GM23248 (cell line): ENCODE measurements at regions of chr1 and their contacts with region 1.

Region 1: DNA sequence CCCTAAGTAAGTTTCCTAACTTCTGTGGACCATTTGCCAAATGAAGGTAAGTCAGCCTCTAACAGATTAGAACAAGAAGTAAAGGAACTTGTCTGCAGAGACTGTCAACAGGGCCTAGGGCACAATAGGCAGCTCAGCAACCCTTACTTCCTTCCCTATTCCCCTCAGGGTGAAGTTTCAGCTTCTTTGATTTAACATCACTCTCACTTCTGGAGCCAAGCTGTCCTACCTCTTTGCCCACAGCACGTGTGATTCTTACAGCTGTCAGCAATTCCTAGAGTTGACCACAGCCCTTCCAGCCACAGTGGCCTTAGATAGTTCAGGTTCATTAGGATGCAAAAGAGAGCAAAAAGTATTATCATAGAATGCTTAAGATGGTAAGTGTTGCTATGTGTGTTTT is 7.6 kb upstream of the EIF4G3 start:
- DNase-seq: no peak
- H3K4me3 ChIP-seq: no peak overlapping the region
- H3K27ac ChIP-seq: no peak overlapping the region
- H3K4me1 ChIP-seq: peaks cover 10% of the 10 kb centered on the region
- H3K27me3 ChIP-seq: no peaks in the 10 kb centered on the region

Region 2: GRCh38 chr1:20696397-20697329 is 487.6 kb before region 1 on chr1:
- in situ Hi-C with region 1: loop called (anchors 10 kb)
- DNase-seq: peak; percentile 97
- H3K4me3 ChIP-seq: peak overlapping the region; percentile 90
- H3K27ac ChIP-seq: peak overlapping the region; percentile 88
- H3K4me1 ChIP-seq: peaks cover 22% of the 10 kb centered on the region
- H3K27me3 ChIP-seq: no peaks in the 10 kb centered on the region